AG04450 (cell line): ENCODE measurements at regions of chr11 and their contacts with region 1.

Region 1: GRCh38 chr11:66638177-66639065 is at the start of gene RBM4:
- DNase-seq: peak; percentile 100
- H3K4me3 ChIP-seq: peak within 1 kb of the TSS; percentile 98
- H3K27ac ChIP-seq: peak within 1 kb of the TSS; percentile 88
- H3K27me3 ChIP-seq: no peaks in the 10 kb centered on the region
- CTCF ChIP-seq: 0 out of 2 replicates have a peak, but pooled peaks have one; percentile 21
- polyA plus RNA-seq, gene RBM4: 234 and 272 TPM in 2 replicates

Region 2: GRCh38 chr11:66408488-66409214 is 229.8 kb before region 1 on chr11:
- CTCF ChIA-PET with region 1: no interaction called
- POLR2A ChIA-PET with region 1: no interaction called
- DNase-seq: peak; percentile 84
- H3K4me3 ChIP-seq: peak overlapping the region; percentile 59
- H3K27ac ChIP-seq: no peak overlapping the region
- H3K27me3 ChIP-seq: peaks cover 4% of the 10 kb centered on the region
- CTCF ChIP-seq: peak; percentile 100

Region 3: DNA sequence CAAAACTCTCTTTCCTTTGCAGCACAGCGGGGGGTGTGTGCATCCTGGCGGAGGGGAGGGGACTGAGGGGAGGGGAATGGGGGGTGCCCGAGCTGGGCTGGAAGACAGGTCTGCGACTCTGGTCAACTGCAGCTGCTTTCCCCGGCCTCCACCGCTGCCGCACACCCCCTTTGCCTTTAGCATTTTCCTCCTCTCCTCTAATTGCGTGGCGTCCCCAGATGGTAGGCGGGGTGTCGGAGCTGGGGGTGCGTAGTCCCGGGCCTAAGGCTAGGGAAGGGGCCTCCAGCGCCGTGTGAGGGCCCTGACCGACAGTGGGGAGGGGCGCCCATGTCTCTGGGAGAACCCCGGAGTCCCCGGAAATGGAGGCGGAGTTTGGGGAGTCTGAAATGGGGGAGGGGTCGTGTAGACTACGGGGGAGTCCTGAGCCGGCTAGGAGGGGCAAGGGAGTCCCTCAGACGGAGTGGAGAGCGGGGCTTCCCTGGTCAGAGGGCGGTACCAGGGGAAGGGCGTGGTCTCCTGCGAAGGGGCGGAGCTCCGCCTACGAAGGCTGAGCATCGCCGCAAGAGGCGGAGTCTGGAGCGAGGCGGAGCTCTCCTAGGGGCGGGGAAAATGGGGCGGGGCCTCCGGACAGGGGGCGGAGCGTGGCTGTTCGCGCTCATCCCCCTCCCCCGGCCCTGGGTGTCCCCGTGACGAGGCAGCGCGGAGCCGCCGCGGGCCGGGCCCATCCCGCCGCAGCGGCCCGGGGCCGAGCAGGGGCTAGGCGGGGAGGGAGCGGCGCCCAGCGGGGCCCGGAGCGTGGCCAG is 172.0 kb before region 1 on chr11 and contains the start of gene PELI3:
- CTCF ChIA-PET with region 1: no interaction called
- POLR2A ChIA-PET with region 1: no interaction called
- DNase-seq: peak; percentile 79
- H3K4me3 ChIP-seq: peak within 1 kb of the TSS; percentile 69
- H3K27ac ChIP-seq: peak within 1 kb of the TSS; percentile 21
- H3K27me3 ChIP-seq: no peaks in the 10 kb centered on the region
- CTCF ChIP-seq: no peak
- polyA plus RNA-seq, gene PELI3: 4.6 and 5.6 TPM in 2 replicates

Region 4: GRCh38 chr11:66607126-66607834 is 31.1 kb before region 1 on chr11:
- CTCF ChIA-PET with region 1: no interaction called
- POLR2A ChIA-PET with region 1: interaction called, 10 read pairs
- DNase-seq: peak; percentile 15
- H3K4me3 ChIP-seq: no peak overlapping the region
- H3K27ac ChIP-seq: peak overlapping the region; percentile 81
- H3K27me3 ChIP-seq: no peaks in the 10 kb centered on the region
- CTCF ChIP-seq: no peak

Region 5: GRCh38 chr11:66616379-66617154 is 21.9 kb before region 1 on chr11 and contains the start of gene RBM14:
- CTCF ChIA-PET with region 1: interaction called, 3 read pairs
- POLR2A ChIA-PET with region 1: interaction called, 61 read pairs
- DNase-seq: peak; percentile 96
- H3K4me3 ChIP-seq: peak within 1 kb of the TSS; percentile 95
- H3K27ac ChIP-seq: peak within 1 kb of the TSS; percentile 93
- H3K27me3 ChIP-seq: no peaks in the 10 kb centered on the region
- CTCF ChIP-seq: no peak
- polyA plus RNA-seq, gene RBM14: 21.4 and 25.0 TPM in 2 replicates

Region 6: GRCh38 chr11:66625041-66625751 is 13.2 kb before region 1 on chr11:
- CTCF ChIA-PET with region 1: no interaction called
- POLR2A ChIA-PET with region 1: interaction called, 61 read pairs
- DNase-seq: no peak
- H3K4me3 ChIP-seq: no peak overlapping the region
- H3K27ac ChIP-seq: no peak overlapping the region
- H3K27me3 ChIP-seq: no peaks in the 10 kb centered on the region
- CTCF ChIP-seq: no peak

Region 7: DNA sequence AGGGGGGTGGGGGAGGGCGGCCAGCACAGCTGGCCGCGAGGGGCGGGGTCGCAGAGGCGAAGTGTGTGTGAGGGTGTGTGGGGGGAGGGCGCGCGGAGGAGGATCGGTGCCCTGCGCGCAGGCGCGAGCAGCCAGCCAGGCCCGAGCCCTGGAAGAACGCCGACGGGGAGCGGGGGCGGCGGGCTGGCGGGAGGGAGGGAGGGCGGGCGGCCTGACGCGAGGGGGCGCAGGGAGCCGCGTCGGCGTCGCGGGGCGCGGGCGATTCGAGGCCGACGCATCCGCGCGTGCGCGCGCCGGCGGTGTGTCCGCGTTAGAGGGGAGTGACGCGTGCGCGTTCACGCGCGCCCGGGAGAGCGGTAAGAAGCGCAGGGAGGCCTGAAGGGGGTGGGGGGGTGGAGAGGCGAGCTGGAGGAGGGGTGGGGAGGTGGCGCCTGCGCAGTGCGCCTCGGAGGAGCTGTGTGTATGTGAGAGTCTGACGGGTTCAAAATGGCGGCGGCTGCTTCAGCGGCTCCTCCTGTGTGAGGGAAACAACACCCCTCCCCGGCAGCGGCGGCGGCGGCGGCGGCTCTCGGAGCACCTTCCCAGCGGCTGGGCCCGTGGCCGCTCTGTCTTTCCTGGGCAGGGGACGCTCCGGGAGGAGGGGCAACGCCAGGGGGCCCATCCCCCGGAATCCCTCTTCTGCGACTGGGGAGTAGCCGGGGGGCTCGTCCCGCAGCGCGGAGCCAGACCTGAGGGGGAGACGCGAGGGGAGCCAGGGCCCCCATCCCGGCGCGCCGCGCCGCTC is 480.6 kb after region 1 on chr11 and contains the start of gene KDM2A:
- CTCF ChIA-PET with region 1: no interaction called
- POLR2A ChIA-PET with region 1: no interaction called
- DNase-seq: peak; percentile 98
- H3K4me3 ChIP-seq: peak within 1 kb of the TSS; percentile 95
- H3K27ac ChIP-seq: peak within 1 kb of the TSS; percentile 68
- H3K27me3 ChIP-seq: no peaks in the 10 kb centered on the region
- CTCF ChIP-seq: no peak
- polyA plus RNA-seq, gene KDM2A: 52.2 and 53.0 TPM in 2 replicates